PC-9 (cell line): ENCODE measurements at regions of chr10 and their contacts with region 1.

Region 1: GRCh38 chr10:102072673-102073527 is 7.8 kb downstream of the HPS6 start:
- DNase-seq: peak in 1 of 2 experiments; percentile 72
- H3K4me3 ChIP-seq: no peak overlapping the region
- H3K27ac ChIP-seq: no peak overlapping the region
- H3K4me1 ChIP-seq: no peaks in the 10 kb centered on the region
- H3K27me3 ChIP-seq: no peaks in the 10 kb centered on the region
- CTCF ChIP-seq: peak; percentile 87

Region 2: GRCh38 chr10:101602761-101603398 is 470.0 kb before region 1 on chr10:
- CTCF ChIA-PET with region 1: no interaction called
- POLR2A ChIA-PET with region 1: no interaction called
- intact Hi-C with region 1: loop called (anchors 2 kb)
- DNase-seq: peak; percentile 58 to 69
- H3K4me3 ChIP-seq: no peak overlapping the region
- H3K27ac ChIP-seq: no peak overlapping the region
- H3K4me1 ChIP-seq: no peaks in the 10 kb centered on the region
- H3K27me3 ChIP-seq: no peaks in the 10 kb centered on the region
- CTCF ChIP-seq: peak; percentile 82

Region 3: DNA sequence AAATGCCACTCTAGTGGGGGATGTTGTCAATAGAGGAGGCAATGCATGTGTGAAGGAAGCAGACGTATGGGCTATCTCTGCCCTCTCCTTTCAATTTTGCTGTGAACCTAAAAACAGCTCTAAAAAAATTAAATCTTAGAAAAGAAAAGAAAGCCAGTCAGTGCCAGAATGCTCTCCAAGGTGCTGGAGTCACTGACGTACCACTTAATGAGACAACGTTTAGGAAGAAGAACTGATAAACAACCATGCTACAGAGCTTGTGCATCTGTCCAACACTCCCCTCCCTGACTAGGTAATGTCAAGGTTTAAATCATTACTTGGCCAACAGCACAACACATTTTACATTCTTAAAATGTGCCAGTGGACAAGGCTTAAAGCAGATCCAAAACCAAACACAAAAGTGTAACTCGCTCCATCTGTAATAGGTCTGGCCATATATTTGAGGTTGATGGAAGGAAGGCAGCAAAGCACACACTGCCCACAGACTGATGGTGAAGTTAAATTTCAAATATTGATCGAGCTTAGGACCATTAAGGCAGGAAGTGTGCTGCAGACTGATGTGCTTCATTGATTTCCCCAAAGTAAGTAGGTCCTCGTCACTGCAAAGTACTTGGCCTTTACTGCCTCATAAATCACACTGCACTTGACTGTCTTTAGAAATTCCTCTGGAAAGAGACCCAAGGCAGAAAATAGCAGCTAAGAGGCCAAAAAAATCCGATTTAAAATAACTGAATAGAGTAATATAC is 32.4 kb before region 1 on chr10:
- CTCF ChIA-PET with region 1: no interaction called
- POLR2A ChIA-PET with region 1: interaction called, 33 read pairs
- intact Hi-C with region 1: no loop called
- DNase-seq: no peak
- H3K4me3 ChIP-seq: no peak overlapping the region
- H3K27ac ChIP-seq: no peak overlapping the region
- H3K4me1 ChIP-seq: no peaks in the 10 kb centered on the region
- H3K27me3 ChIP-seq: no peaks in the 10 kb centered on the region
- CTCF ChIP-seq: no peak

Region 4: DNA sequence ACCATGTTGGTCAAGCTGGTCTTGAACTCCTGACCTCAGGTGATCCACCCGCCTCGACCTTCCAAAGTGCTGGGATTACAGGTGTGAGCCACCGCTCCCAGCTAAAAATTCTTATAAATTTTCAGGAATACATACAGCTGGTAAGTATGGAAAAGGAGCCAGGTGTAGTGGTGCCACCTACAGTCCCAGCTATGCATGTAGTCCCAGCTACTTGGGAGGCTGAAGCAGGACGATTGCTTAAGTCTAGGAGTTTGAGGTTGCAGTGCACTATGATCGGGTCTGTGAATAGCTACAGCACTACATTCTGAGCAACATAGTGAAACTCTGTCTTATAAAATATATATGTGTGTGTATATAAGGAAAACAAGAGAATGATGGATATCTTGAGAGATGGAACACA is 28.3 kb after region 1 on chr10:
- CTCF ChIA-PET with region 1: interaction called, 4 read pairs
- POLR2A ChIA-PET with region 1: interaction called, 11 read pairs
- intact Hi-C with region 1: no loop called
- DNase-seq: no peak
- H3K4me3 ChIP-seq: no peak overlapping the region
- H3K27ac ChIP-seq: no peak overlapping the region
- H3K4me1 ChIP-seq: no peaks in the 10 kb centered on the region
- H3K27me3 ChIP-seq: no peaks in the 10 kb centered on the region
- CTCF ChIP-seq: peak; percentile 43; the same call in 1 of the 2 replicates